ENCODE measurements at regions of chrX and their contacts with region 1.

Region 1: GRCh38 chrX:45758319-45758718 is 557.6 kb upstream of the DIPK2B start:
- DNase-seq: peak; percentile 78 to 83 (median 78)
- H3K4me3 ChIP-seq: peak overlapping the region; percentile 16 to 59 (median 34)
- H3K4me3 Mint-ChIP-seq: peak overlapping the region; percentile 65 to 88
- H3K27ac ChIP-seq: peak overlapping the region; percentile 70 to 87
- H3K27ac Mint-ChIP-seq: peak overlapping the region; percentile 89 to 96 (median 93)
- H3K4me1 ChIP-seq: peaks cover 86 to 95% of the 10 kb centered on the region in 2 donors
- H3K4me1 Mint-ChIP-seq: peaks cover 69% of the 10 kb centered on the region
- H3K27me3 ChIP-seq: peaks cover 0 to 14% of the 10 kb centered on the region in 2 donors
- H3K27me3 Mint-ChIP-seq: peaks cover 0 to 13% (median 0%) of the 10 kb centered on the region in 3 donors
- CTCF ChIP-seq: no peak

Region 2: DNA sequence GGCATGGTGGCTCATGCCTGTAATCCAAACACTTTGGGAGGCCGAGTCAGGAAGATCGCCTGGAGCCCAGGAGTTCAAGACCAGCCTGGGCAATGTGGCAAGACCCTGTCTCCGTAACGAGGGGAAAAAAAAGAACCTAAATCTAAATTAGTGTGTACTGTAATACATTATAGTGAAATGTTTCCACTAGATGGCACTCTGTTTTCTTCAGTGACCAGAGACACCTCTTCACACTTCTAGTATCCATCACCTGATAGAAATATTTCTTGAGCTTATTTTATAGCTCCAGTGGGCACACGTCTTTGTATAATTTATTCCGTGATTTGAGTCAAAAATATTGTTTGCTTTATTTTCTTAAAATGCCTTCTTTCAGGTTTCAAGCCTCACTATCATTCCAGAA is 43.2 kb after region 1 on chrX:
- intact Hi-C with region 1: loop called in 1 of 2 experiments (anchors 10 kb)
- DNase-seq: peak in 2 of 3 donors; percentile 50 to 64
- H3K4me3 ChIP-seq: no peak overlapping the region
- H3K4me3 Mint-ChIP-seq: peak overlapping the region in 1 of 2 donors; percentile 30
- H3K27ac ChIP-seq: peak overlapping the region in 1 of 2 donors; percentile 6
- H3K27ac Mint-ChIP-seq: peak overlapping the region in 4 of 7 donors; percentile 8 to 68 (median 40)
- H3K4me1 ChIP-seq: peaks cover 30 to 48% of the 10 kb centered on the region in 2 donors
- H3K4me1 Mint-ChIP-seq: peaks cover 33% of the 10 kb centered on the region
- H3K27me3 ChIP-seq: peaks cover 0 to 31% of the 10 kb centered on the region in 2 donors
- H3K27me3 Mint-ChIP-seq: peaks cover 0 to 45% (median 0%) of the 10 kb centered on the region in 3 donors
- CTCF ChIP-seq: peak; percentile 59